ENCODE measurements at regions of chr11 and their contacts with region 1.

Region 1: GRCh38 chr11:11621573-11622319 is at the start of gene GALNT18:
- DNase-seq: peak; percentile 94
- total RNA-seq, gene GALNT18: 23.2 TPM

Region 2: DNA sequence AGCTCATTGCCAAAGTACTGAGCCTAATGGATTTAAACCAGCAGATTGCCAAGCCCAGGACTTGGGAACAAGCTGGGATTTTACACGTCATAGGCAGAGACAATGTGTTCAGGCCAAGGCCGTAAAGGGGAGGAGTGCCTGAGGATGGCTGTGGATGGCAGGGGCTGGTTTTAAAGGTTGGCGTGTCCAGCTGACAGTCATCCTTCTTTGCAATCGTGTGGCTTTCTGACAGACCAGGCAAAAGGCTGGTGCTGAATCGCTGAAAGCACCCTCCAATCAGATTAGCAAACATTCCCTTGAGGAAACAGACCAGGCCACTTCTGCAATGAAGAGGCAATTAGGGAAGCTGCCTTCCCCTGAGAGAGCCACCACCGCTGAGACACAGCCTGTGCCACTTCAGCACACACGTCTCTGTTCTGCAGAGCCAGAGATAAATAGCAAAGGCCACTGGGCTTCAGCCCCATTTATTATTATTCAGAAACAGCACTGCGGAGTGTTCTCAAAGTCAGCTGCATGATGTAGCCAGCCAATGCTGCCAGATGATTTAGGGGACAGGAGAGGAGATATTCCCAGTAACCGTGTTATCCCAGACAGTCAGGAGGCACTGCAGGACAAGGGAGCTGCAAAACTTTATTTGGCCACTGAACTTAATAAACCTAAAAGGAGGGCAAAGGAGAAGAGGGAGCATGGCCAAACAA is 214.5 kb before region 1 on chr11:
- intact Hi-C with region 1: loop called (anchors 5 kb)
- DNase-seq: no peak

Region 3: DNA sequence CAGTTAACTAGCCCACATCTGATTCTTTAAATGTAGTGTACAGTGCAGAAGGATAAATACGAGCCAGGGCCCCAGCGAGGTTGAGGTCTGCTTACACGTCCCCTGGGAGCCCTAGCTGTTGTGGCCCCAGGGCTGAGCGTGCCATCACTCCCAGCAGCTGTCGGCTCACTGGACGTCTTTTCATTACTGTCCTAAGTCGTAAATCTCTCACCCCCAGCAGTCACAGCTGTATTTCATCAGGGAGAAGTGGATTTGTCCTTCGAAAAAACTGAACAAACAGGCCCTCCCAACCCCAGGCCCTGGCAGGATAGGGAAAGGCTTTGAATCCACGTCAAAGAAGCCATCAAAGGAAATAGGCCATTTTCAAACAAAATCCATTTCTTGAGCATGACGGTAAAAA is 158.3 kb before region 1 on chr11:
- intact Hi-C with region 1: loop called (anchors 5 kb)
- DNase-seq: no peak

Region 4: DNA sequence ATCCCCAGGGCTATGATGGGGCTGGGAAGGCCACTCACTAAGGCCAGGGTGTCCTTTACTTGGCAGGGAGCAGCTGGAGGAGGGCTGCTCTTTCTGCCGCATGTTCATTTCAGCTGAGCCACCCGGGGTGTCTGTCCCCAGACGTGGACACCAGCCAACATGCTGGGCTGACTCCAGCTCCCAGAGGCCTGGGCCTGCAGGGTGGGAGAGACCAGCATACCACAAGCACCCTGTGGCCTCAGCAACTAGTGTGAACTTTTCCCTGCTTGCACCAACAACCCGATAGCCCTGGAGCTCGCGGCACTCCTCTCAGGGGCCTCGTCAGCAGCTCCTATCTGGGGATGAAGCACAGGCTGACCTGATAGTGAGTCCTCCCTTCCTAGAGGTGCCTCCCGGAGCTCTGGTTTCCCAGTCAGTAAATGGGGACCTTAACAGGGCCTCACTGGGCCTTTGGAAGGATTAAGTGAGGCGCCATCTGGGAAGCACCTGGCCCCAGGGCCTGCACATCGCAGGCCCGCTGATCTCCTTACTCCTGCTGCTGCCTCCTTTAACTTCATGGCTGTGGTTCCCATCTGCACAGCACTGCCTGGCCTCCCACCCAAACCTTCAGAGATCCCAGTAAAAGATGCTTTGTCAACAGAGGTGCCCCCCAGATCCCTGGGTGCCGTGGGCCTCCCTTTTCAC is 83.3 kb before region 1 on chr11:
- intact Hi-C with region 1: loop called (anchors 5 kb)
- DNase-seq: peak; percentile 89

Region 5: DNA sequence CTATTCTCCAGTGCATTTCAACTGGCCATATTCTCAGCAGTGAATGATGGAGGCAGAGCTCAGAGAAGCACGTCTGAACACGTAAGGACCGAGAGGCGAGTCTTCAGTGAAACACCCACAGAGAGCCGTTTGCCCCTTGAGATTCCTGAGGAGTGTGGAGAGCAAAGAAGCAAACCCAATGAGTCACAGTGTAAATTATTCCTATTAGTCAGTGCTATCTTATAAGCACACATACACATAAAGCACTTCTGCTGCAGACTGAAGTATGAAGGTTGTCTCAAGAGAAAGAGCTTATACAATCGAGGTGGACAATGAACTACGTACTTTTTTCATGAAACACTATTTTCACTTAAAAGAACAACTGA is 37.3 kb before region 1 on chr11:
- intact Hi-C with region 1: loop called (anchors 5 kb)
- DNase-seq: no peak

Region 6: GRCh38 chr11:11681536-11681935 is 59.8 kb after region 1 on chr11:
- intact Hi-C with region 1: no loop called
- DNase-seq: no peak

Region 7: DNA sequence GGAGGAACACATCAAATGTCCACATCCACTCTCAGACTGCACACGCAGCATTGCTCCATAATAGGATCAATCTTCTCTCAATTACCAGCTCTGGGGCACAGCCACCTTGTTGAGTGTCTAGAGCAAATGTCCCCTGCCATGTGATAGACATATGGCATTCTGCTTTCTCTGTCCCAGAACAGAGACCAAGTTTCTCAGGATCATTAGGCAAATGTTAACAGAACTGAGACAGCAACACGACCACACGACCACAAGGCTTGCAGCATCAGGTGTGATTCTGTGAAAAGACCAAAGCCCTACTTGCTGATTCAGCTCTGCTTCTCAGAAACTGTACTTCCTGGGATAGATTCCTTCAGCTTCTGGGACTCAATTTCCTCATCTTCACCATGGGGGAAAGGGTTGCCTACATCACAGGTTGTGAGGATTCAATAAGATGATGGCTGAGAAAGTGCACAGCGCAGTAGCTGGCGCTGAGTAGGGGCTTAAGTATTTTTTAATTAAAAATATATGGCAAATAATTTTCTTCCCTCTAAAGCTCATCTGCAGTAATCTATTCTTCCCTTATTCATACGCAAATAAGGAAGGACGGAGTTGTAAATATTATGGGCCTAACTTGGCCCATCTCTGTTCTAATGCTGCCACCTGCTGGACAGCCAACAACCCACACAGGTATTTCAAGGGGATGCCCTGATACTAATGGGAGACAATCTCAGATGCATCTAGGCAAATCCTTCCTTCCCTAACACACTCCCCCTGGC is 165.7 kb after region 1 on chr11:
- intact Hi-C with region 1: loop called (anchors 5 kb)
- DNase-seq: no peak

Region 8: DNA sequence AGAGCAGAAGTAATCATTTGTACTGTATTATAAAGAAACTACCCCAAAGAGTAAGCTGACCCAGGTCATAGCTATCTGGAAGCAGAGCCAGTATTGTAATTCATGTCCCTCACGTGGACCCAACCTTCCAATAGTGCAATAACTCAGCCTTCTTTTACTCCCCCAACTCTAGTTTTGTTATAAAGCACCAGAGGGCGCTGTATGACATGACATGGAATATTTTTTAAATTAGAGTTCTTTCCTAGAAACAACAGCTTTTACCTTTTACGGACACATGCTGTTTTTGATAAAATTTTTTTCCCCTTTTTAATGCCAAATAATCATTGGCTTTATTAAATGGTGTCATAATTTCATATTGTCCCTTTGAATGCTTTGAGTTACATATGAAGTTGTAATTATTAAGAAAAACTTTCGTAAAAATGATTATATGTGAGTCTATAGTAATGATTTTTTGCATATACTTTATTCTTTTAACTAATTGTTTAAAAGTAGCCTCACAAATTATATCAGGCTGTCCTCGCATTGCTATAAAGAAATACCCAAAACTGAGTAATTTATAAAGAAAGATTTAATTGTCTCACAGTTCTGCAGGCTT is 309.8 kb after region 1 on chr11:
- intact Hi-C with region 1: no loop called
- DNase-seq: no peak